Activated B cell treated with CpG ODN at 0.5 μM for 24 hours (primary cell): ENCODE measurements at regions of chr2 and their contacts with region 1.

Region 1: DNA sequence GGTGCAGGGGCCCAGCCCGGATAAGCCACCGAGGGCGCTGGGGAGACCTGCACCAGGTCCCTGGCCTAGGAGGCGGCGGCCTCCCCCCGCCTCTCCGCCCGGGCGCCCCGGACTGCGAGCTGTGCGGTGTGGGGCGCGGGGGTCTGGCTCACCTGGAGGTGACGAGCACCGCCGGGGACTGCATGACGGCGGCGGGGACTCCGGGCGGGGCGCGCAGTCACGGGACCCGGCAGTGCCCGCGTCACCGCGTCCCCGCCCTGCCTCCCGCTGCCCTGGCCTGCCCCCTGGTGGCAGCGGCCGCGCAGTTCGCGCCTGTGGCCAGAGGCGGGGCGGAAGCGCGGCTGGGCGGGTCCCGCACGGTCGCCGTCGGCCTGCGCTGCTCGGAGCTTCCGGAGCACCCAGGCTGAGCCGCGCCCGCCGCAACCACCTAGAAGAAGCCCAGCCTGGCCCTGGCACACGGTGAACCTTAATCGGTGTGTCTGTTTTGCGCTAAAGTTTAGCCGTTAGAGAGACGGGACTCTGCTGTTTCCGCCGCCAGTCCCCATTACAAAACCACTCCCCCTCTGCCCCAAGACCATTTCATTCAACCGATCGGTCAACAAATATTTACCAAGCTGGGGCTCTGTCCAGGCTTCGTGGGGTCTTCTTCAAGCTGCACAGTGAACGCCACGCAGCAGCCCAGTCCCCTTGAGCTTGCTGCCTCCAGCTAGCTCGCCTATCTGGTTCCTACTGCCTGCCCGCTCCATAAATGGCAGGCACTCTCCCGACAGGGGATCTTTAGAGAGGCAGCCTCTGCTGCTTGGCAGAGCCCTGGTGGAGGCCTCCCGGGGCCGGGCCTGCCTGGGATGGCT is at the start of gene HS1BP3:
- DNase-seq: peak; percentile 97
- ATAC-seq: peak; percentile 95
- H3K4me3 Mint-ChIP-seq: peak within 1 kb of the TSS; percentile 87
- H3K27ac Mint-ChIP-seq: peak within 1 kb of the TSS; percentile 94
- H3K4me1 Mint-ChIP-seq: peaks cover 41% of the 10 kb centered on the region
- H3K27me3 Mint-ChIP-seq: peaks cover 3% of the 10 kb centered on the region
- CTCF ChIP-seq: no peak
- total RNA-seq, gene HS1BP3: 13.0 and 13.1 TPM in 2 replicates

Region 2: DNA sequence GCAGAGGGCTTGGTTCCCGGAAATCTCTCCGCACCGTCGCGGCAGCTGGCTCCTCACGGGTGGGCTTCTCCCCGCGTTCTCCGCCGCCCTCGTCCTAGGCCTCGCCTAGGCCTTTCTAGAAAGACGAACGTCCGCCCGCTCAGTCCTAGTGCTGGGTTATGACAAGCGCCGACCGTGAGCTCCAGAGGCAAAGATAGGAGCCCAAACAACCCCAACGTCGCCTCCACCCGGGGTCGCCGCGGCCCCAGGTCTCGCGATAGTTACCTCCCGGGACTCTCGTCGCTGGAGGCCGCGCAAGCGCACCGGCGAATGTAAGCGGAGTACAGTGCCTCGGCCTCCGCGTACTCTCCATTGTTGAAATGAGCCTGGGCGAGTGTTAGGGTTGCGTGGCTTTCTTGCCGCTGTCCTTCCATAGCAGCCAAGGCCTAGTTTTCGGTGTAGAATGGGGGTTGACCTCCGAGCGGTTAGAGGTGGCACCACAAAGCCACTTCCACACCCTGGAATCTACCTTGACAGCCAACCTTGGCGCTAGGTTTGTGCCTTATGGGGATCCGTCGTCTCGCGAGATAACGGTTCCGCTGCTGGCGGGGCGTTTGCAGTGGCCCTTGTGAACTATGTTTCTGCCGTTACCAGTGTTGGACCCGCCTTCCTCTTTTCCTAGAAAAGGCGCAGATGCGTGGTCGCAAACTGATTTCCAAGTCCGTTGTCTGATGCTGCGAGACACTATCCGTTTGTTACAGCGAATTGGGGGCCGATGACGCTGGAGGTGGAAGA is 749.5 kb before region 1 on chr2 and contains the start of gene TTC32:
- CTCF ChIA-PET with region 1: no interaction called
- POLR2A ChIA-PET with region 1: interaction called, 4 read pairs
- intact Hi-C with region 1: loop called (anchors 1 kb)
- DNase-seq: peak; percentile 91
- ATAC-seq: peak; percentile 91
- H3K4me3 Mint-ChIP-seq: peak within 1 kb of the TSS; percentile 99
- H3K27ac Mint-ChIP-seq: peak within 1 kb of the TSS; percentile 99
- H3K4me1 Mint-ChIP-seq: peaks cover 44% of the 10 kb centered on the region
- H3K27me3 Mint-ChIP-seq: peaks cover 7% of the 10 kb centered on the region
- CTCF ChIP-seq: no peak
- total RNA-seq, gene TTC32: 18.4 and 22.8 TPM in 2 replicates

Region 3: GRCh38 chr2:20350753-20351554 is 300.2 kb before region 1 on chr2 and contains the start of gene PUM2:
- CTCF ChIA-PET with region 1: no interaction called
- POLR2A ChIA-PET with region 1: interaction called, 6 read pairs
- intact Hi-C with region 1: loop called (anchors 1 kb)
- DNase-seq: peak; percentile 96
- ATAC-seq: peak; percentile 83
- H3K4me3 Mint-ChIP-seq: peak within 1 kb of the TSS; percentile 92
- H3K27ac Mint-ChIP-seq: peak within 1 kb of the TSS; percentile 86
- H3K4me1 Mint-ChIP-seq: peaks cover 38% of the 10 kb centered on the region
- H3K27me3 Mint-ChIP-seq: no peaks in the 10 kb centered on the region
- CTCF ChIP-seq: no peak
- total RNA-seq, gene PUM2: 94.9 and 110 TPM in 2 replicates

Region 4: DNA sequence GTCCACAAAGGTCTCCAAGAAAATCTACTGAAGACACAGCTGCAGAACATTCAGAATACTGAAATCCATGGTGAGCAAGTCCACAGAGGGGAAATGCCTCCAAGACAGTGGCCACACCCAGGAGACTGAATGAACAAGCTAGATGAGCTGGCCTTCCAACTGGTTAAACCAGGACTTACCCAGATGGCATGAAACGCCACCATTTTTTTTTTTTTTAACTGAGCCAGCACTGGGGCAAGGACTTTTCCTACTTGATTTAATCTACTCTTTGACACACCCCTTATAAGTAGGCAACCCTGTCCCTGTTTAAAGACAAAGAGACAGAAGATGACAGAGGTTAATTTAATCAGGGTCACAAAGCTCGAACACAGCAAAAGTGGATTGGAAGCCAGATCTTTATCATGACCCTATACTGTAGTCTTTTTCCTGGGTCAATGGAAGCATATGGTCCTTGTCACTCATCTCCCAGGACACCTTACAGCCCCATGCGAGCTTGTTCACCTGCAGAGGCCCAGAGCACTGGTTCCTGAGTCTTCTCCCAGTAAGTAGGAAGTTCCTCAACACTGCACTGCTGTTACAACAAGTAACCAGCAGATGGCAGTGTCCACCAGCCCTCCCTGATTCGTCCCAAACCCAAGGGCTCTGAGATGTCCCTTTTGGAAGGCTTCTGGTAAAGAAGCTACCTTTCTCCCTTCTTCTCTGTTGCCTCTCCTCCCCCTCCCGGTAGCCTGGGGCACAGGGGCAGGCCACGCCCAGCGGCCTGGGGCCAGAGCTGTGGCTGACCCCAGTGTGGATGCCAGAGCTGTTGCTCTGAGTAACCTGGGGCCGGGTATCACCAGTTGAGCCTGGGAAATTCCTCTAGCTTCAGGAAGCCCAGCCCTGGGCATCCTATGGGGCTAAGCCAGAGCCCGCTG is 10.2 kb after region 1 on chr2:
- CTCF ChIA-PET with region 1: interaction called, 36 read pairs
- POLR2A ChIA-PET with region 1: interaction called, 36 read pairs
- intact Hi-C with region 1: no loop called
- DNase-seq: peak; percentile 53
- ATAC-seq: peak; percentile 77
- H3K4me3 Mint-ChIP-seq: no peak overlapping the region
- H3K27ac Mint-ChIP-seq: no peak overlapping the region
- H3K4me1 Mint-ChIP-seq: peaks cover 16% of the 10 kb centered on the region
- H3K27me3 Mint-ChIP-seq: peaks cover 16% of the 10 kb centered on the region
- CTCF ChIP-seq: peak; percentile 63

Region 5: GRCh38 chr2:20675701-20676352 is 24.7 kb after region 1 on chr2:
- CTCF ChIA-PET with region 1: interaction called, 5 read pairs
- POLR2A ChIA-PET with region 1: interaction called, 19 read pairs
- intact Hi-C with region 1: no loop called
- DNase-seq: peak; percentile 51
- ATAC-seq: peak; percentile 82
- H3K4me3 Mint-ChIP-seq: peak overlapping the region; percentile 64
- H3K27ac Mint-ChIP-seq: peak overlapping the region; percentile 94
- H3K4me1 Mint-ChIP-seq: peaks cover 73% of the 10 kb centered on the region
- H3K27me3 Mint-ChIP-seq: no peaks in the 10 kb centered on the region
- CTCF ChIP-seq: no peak